ENCODE measurements at regions of chr1 and their contacts with region 1.

Region 1: DNA sequence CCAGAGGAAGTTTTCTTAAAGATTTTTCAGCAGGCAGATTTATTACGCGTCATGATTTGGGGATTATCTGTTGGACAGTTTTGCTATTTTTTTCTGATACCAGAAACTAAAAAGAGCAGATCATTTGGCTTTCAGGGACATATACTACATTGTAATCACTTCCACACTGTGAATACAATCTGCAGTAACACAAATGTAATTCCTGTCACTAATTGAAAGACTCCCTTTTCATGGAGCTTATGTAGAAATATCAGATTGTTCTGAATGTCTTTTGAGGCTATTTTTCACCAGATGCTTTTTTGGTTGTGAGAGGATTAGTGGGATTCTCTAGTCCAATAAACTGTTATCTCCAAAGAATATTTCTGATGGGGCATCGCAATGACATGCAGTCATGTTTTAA is 464.2 kb downstream of the DISC1 start:
- H3K4me3 ChIP-seq: no peak overlapping the region
- H3K27ac ChIP-seq: no peak overlapping the region
- H3K4me1 ChIP-seq: no peaks in the 10 kb centered on the region
- CTCF ChIP-seq: no peak

Region 2: DNA sequence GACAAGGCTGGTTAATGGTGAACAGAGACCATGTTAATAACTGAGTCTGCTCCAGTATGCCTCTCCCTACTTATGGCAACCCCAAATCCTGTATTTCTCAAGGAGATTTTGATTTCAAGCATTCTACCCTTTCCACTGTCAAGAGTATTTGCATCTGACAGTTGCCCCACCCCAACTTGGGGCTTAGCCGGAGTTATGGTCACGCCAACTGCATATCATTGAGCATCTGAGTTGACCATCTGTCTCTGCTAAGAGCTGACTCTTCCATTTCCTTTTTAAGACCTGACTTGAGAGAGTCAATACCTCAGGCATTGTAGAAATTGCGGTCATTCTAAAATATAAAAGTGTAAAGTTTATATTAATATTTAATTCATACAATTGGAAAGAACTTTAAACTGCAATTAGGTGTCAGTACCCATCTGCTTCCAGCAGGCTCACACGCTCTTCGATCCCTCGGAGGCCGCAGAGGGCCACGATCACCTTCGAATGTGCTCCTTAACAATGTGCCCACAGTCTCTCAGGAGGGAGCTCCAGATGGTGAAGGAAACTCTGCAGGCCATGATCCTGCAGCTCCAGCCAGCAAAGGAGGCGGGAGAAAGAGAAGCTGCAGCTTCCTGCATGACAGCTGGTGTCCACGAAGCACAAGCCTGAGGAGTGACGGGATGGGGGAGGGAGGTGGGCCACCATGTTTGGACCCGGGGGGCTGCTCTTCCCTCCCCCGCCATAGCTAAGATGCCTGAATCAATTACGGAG is 54.5 kb before region 1 on chr1:
- CTCF ChIA-PET with region 1: no interaction called
- POLR2A ChIA-PET with region 1: interaction called, 11 read pairs
- H3K4me3 ChIP-seq: no peak overlapping the region
- H3K27ac ChIP-seq: no peak overlapping the region
- H3K4me1 ChIP-seq: peaks cover 8% of the 10 kb centered on the region
- CTCF ChIP-seq: no peak

Region 3: GRCh38 chr1:232047474-232047873 is 43.3 kb before region 1 on chr1:
- CTCF ChIA-PET with region 1: no interaction called
- POLR2A ChIA-PET with region 1: no interaction called
- H3K4me3 ChIP-seq: no peak overlapping the region
- H3K27ac ChIP-seq: no peak overlapping the region
- H3K4me1 ChIP-seq: no peaks in the 10 kb centered on the region
- CTCF ChIP-seq: no peak

Region 4: GRCh38 chr1:232110281-232111090 is 19.7 kb after region 1 on chr1:
- CTCF ChIA-PET with region 1: no interaction called
- POLR2A ChIA-PET with region 1: no interaction called
- H3K4me3 ChIP-seq: no peak overlapping the region
- H3K27ac ChIP-seq: no peak overlapping the region
- H3K4me1 ChIP-seq: no peaks in the 10 kb centered on the region
- CTCF ChIP-seq: no peak